Posterior cingulate gyrus (tissue), 11 donors: ENCODE measurements at regions of chr17 and their contacts with region 1.

Region 1: GRCh38 chr17:56592487-56593085 is 913 bp upstream of the NOG start:
- DNase-seq: peak; percentile 37 to 94 (median 68)

Region 2: DNA sequence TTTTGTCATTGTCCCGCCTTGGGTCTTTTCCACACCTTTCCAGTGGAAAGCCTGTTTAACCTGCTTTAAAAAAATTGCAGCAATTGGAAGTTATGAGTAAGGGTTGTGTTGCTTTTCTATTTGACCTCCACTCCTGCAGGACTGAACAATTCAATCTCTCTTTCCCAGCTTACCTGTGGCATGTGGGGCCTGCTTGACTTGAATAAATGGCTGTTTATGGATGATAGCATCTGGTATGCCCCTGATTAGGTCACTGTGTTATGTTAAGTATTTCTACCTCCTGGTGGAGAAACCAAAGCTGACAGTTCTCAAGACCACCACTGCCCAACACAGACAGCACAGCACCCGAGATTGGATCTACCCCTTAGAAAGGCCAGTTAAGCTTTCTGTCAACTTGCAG is 63.9 kb before region 1 on chr17:
- intact Hi-C with region 1: no loop called
- DNase-seq: no peak

Region 3: GRCh38 chr17:56679115-56679766 is 86.7 kb after region 1 on chr17:
- intact Hi-C with region 1: loop called (anchors 2 kb)
- DNase-seq: no peak

Region 4: GRCh38 chr17:56715613-56716357 is 123.2 kb after region 1 on chr17:
- intact Hi-C with region 1: loop called (anchors 1 kb)
- DNase-seq: peak; percentile 56 to 95 (median 79)

Region 5: DNA sequence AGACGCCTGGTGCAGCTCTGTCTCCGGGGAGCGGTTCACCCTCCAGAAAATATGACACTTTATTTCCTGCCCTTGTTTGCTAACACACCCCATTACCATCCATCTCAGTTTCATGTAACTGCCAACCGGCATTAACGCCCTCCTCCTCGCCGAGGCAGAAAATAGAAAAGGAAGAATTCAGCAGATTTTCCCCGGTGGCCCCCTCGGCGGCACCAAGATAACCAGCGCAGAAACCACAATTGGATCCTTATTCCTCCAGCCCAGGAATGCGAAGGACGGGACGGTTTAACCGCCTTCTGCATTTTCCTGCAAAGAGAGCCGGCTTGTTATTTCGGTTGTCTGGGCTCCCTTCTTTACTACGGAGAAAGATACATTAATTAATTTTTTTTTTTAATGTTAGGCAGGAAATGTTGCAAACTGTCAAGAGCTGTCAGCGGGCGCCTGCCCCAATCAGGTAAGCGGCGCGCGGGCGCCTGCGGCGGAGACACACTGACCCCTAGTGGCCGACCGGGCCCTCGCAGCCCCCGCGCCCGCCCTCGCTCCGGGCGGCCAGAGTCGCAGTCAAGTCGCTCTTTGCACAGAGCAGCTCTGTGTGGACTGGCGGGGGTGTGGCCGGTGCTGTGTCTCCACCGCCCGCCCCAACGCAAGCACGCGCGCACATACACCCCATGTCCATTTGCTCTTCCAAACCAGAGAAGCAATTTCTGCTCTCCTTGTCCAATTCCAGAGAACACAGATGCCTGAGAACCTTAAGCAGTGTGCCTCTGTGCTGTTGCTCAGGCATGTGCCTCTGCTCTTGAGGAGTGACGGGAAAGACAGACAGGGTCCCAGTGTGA is 187.5 kb after region 1 on chr17:
- intact Hi-C with region 1: loop called (anchors 1 kb)
- DNase-seq: peak; percentile 55 to 97 (median 77)